Breast epithelium (tissue), 4 donors: ENCODE measurements at regions of chr9 and their contacts with region 1.

Region 1: DNA sequence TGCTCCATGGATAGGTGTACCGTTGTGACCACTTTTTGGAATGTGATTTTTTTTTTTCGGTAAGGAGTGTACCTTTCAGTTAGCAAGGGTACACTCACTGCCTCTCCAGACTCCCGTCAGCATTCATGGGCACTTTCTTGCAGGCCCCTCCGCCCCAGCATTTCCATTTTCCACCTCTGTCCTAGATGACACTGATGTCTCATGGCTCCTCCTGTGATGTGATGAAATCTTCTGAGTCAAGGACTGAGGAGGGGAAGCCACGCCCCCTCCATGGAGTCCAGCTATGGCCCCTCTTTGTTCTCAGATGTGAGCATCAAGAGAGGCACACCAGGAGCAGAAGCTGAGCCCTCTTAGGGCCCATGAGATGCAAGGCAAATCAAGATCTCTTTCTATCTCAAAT is 61.8 kb downstream of the CTSL start:
- DNase-seq: no peak
- H3K4me3 ChIP-seq: no peak overlapping the region
- H3K27ac ChIP-seq: no peak overlapping the region
- H3K4me1 ChIP-seq: no peaks in the 10 kb centered on the region
- H3K27me3 ChIP-seq: no peaks in the 10 kb centered on the region
- CTCF ChIP-seq: no peak
- POLR2A ChIP-seq: no peak

Region 2: GRCh38 chr9:86389628-86390027 is 1398.1 kb before region 1 on chr9:
- intact Hi-C with region 1: loop called (anchors 10 kb)
- DNase-seq: no peak
- H3K4me3 ChIP-seq: no peak overlapping the region
- H3K27ac ChIP-seq: no peak overlapping the region
- H3K4me1 ChIP-seq: no peaks in the 10 kb centered on the region
- H3K27me3 ChIP-seq: no peaks in the 10 kb centered on the region
- CTCF ChIP-seq: no peak
- POLR2A ChIP-seq: no peak

Region 3: GRCh38 chr9:88266416-88266815 is 478.7 kb after region 1 on chr9:
- intact Hi-C with region 1: no loop called
- DNase-seq: no peak
- H3K4me3 ChIP-seq: no peak overlapping the region
- H3K27ac ChIP-seq: no peak overlapping the region
- H3K4me1 ChIP-seq: no peaks in the 10 kb centered on the region
- H3K27me3 ChIP-seq: no peaks in the 10 kb centered on the region
- CTCF ChIP-seq: no peak
- POLR2A ChIP-seq: no peak